Sigmoid colon (tissue), 7 donors: ENCODE measurements at regions of chr4 and their contacts with region 1.

Region 1: GRCh38 chr4:41111791-41112190 is 102.6 kb downstream of the APBB2 start:
- DNase-seq: no peak
- H3K4me3 ChIP-seq: no peak overlapping the region
- H3K27ac ChIP-seq: no peak overlapping the region
- H3K4me1 ChIP-seq: no peaks in the 10 kb centered on the region
- H3K27me3 ChIP-seq: no peaks in the 10 kb centered on the region
- CTCF ChIP-seq: no peak
- EP300 ChIP-seq: no peak
- POLR2A ChIP-seq: no peak

Region 2: GRCh38 chr4:41077628-41078027 is 34.2 kb before region 1 on chr4:
- intact Hi-C with region 1: loop called (anchors 5 kb)
- DNase-seq: no peak
- H3K4me3 ChIP-seq: no peak overlapping the region
- H3K27ac ChIP-seq: no peak overlapping the region
- H3K4me1 ChIP-seq: peaks cover 0 to 10% (median 1%) of the 10 kb centered on the region in 4 donors
- H3K27me3 ChIP-seq: no peaks in the 10 kb centered on the region
- CTCF ChIP-seq: no peak
- EP300 ChIP-seq: no peak
- POLR2A ChIP-seq: no peak